ENCODE measurements at regions of chr7 and their contacts with region 1.

Region 1: DNA sequence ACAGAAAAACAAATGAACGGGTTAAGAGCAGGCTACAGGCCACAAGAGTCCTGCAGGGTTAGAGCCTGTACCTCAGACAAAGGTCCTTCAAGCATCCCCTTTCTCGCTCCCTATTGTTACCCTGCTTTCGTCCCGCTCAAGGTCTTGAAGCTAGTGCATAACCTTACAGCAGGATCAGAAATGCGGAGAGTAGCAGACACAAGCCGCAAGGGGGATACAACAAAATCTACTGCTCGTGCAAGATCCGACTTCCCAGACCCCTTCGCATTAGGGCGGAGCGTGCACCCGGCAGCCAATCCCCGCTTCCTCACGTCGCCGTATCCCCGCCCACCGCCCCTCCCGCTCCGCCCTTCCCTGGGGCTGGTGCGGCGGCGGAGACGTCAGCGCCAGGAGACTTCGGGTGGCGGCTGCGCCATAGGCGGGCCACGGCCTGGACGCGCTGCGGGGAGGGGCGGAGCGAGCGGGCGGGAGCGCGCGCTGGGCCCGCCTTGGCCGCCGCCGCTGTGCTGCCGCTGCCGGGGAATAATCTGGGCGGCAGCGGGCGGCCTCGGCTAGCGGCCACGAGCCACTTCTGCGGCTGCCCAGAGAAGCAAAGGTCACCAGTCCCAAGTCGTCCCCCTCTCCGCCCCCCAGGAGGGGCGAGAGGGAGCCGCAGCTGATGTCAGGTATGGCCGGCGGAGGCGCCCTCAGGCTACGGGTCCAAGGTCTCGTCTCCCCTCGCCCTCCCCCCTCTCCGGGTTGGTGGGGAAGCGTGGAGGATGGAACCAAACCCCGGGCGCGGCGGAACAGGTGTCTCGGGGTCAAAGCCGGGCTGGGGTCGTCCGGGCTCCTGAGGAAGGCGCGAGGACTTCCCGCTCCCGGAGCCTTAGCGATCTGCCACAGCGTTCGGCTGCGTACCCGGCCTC is at the start of gene C1GALT1:
- DNase-seq: peak; percentile 98
- ATAC-seq: peak; percentile 91
- H3K4me3 Mint-ChIP-seq: peak within 1 kb of the TSS; percentile 90
- H3K27ac Mint-ChIP-seq: peak within 1 kb of the TSS; percentile 99
- H3K4me1 Mint-ChIP-seq: peaks cover 20% of the 10 kb centered on the region
- H3K27me3 Mint-ChIP-seq: no peaks in the 10 kb centered on the region
- CTCF ChIP-seq: peak; percentile 8
- total RNA-seq, gene C1GALT1: 39.0 to 39.5 TPM

Region 2: DNA sequence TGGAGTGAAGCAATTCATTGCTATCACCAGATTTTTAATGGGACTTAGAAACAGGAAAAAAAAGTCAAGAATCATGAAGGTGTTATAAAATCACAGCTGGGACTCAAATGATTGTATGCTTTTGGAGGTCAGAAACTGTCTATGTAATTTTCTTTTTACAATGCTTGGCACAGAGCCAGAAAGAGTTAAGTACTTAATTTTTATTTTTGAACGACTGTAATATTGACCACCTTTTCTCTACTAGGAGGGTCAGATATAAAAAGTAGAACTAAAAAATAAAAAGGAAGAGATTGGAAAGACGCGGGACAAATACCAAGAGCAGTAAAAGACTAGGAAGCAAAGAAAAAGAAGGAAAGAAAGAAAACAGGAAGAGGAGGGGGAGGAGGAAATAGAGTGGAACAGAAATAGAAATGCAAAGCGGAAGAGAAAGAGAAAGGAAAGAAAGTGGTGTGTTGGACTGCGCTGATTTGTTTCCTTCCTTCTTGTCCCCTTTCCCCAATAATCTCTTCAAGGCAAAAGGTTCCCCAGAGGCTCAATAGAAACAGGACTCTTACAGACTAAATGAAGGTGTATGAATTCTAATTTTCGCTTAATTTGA is 23.2 kb before region 1 on chr7:
- CTCF ChIA-PET with region 1: interaction called, 5 read pairs
- POLR2A ChIA-PET with region 1: interaction called, 10 read pairs
- intact Hi-C with region 1: no loop called
- DNase-seq: no peak
- ATAC-seq: no peak
- H3K4me3 Mint-ChIP-seq: peak overlapping the region; percentile 68
- H3K27ac Mint-ChIP-seq: peak overlapping the region; percentile 91
- H3K4me1 Mint-ChIP-seq: peaks cover 49% of the 10 kb centered on the region
- H3K27me3 Mint-ChIP-seq: no peaks in the 10 kb centered on the region
- CTCF ChIP-seq: no peak

Region 3: DNA sequence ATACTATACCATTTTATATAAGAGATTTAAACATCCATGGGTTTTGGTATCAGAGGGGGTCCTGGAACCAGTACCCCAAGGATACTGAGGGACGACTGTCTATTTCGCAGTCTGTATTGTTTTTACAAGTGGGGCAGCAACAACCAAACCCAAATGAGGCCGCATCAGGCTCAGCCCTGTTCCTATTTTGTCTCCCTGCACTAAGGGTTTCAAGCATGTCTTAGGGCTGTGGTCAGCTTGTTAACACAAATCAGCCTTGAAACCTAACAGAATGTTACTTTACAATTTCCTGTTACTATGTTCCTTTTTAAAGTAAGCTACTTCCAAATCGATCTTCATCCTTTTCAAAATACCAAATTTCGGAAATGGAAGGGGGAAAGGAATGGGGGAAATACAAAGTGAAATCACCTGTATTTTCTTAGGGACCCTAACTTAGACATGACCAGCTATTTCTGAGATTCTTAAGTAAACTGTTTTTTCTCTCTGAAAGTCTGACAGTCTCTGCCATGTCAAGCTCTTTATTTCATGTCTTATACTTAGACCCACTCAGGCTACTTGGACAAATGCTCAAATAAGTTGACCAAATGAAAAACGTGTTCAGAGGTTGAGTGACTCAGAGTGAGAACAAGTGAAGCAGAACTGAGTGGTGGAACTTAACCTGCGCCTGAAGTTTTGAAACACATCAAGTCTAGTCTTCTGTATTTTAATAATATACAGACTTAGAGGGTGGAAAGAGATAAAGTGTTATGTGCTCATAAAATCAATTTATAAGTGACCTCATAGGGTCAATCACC is 75.7 kb after region 1 on chr7:
- CTCF ChIA-PET with region 1: interaction called, 3 read pairs
- POLR2A ChIA-PET with region 1: no interaction called
- intact Hi-C with region 1: loop called (anchors 5 kb)
- DNase-seq: peak; percentile 20
- ATAC-seq: peak; percentile 69
- H3K4me3 Mint-ChIP-seq: peak overlapping the region; percentile 26
- H3K27ac Mint-ChIP-seq: peak overlapping the region; percentile 84
- H3K4me1 Mint-ChIP-seq: peaks cover 32% of the 10 kb centered on the region
- H3K27me3 Mint-ChIP-seq: no peaks in the 10 kb centered on the region
- CTCF ChIP-seq: no peak

Region 4: DNA sequence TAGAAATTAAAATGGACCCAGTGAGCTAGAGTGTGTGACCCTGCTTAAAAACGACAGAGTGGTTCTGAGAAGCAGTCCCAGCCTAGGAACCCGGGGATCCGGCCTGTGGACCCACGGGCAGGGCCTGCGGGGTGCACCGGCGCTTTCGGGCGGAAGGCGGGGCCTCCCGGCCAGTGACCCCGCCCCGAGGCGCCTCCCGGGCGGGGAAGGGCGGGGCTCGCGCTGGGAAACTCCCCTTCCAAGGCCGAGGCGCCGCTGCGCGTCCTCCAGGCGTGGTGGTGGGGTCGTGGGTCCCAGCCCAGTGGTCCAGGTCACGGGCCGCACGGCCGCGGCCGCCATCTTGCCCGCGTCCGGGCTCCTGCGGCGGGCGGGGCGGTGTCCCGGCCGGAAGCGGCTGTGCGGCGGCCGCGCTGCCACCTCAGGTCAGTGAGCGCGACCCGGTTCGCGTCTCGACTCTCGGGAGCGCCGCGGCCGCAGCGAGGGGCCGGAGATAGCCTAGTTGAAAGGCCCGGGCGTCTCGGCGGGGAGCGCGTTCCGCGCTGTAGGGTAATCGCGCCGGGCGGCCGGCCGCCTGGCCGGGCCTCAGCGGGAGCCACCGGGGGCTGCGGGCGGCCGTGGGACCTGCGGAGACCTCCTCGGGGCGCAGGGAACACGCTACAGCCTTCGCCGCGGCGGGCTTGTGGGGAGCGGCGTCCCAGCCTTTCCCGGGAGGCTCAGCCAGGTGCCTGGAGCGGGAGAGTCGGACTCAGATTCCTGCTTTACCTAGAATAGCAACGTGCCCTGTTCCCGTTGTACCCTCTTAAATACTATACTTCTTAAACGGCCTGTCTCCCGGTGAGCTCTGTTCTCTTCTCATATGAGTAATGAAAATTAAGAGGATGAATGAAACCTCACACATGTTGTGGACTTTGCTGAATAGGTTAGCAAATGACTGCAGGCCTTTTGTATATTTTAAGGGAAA is 384.5 kb after region 1 on chr7 and contains the start of gene MIOS:
- CTCF ChIA-PET with region 1: interaction called, 3 read pairs
- POLR2A ChIA-PET with region 1: interaction called, 4 read pairs
- intact Hi-C with region 1: loop called (anchors 5 kb)
- DNase-seq: peak; percentile 80
- ATAC-seq: peak; percentile 88
- H3K4me3 Mint-ChIP-seq: peak within 1 kb of the TSS; percentile 87
- H3K27ac Mint-ChIP-seq: peak within 1 kb of the TSS; percentile 96
- H3K4me1 Mint-ChIP-seq: peaks cover 22% of the 10 kb centered on the region
- H3K27me3 Mint-ChIP-seq: no peaks in the 10 kb centered on the region
- CTCF ChIP-seq: no peak
- total RNA-seq, gene MIOS: 63.0 to 67.3 TPM